ENCODE measurements at regions of chr4 and their contacts with region 1.

Region 1: GRCh38 chr4:112060212-112060611 is 85.0 kb upstream of the FAM241A start:
- DNase-seq: peak; percentile 49
- H3K4me3 Mint-ChIP-seq: no peak overlapping the region
- H3K27ac Mint-ChIP-seq: no peak overlapping the region
- H3K4me1 Mint-ChIP-seq: peaks cover 4% of the 10 kb centered on the region
- H3K27me3 Mint-ChIP-seq: no peaks in the 10 kb centered on the region
- CTCF ChIP-seq: peak; percentile 49

Region 2: DNA sequence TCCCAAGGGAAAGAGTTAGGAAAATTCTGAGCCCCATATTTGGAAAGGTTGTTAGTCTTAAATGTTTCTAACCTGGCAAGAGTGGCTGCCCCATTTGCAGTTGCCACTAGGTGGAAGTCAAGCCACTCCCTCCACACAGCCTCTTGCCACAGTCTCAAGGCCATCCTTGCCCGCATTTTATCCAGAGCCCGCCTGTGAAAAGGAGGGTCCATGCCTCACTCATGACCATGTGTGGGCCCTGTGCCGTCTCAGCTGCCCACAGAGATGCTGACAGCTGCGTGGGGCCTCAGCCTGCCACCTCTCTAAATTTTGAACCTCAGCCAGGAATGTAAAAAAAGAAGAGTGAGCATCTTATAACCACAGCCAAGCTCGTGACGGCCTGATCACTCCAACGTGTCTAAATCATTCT is 116.4 kb before region 1 on chr4:
- CTCF ChIA-PET with region 1: interaction called, 4 read pairs
- POLR2A ChIA-PET with region 1: no interaction called
- intact Hi-C with region 1: loop called (anchors 1 kb)
- DNase-seq: peak; percentile 68
- H3K4me3 Mint-ChIP-seq: no peak overlapping the region
- H3K27ac Mint-ChIP-seq: no peak overlapping the region
- H3K4me1 Mint-ChIP-seq: no peaks in the 10 kb centered on the region
- H3K27me3 Mint-ChIP-seq: peaks cover 27% of the 10 kb centered on the region
- CTCF ChIP-seq: peak; percentile 47